ENCODE measurements at regions of chr3 and their contacts with region 1.

Region 1: GRCh38 chr3:101635954-101636798 is 40.8 kb downstream of the ZBTB11 start:
- DNase-seq: peak; percentile 40 to 85 (median 56)
- ATAC-seq: peak; percentile 69
- H3K4me3 ChIP-seq: peak overlapping the region; percentile 63
- H3K27ac ChIP-seq: peak overlapping the region; percentile 86
- H3K4me1 ChIP-seq: peaks cover 0 to 5% of the 10 kb centered on the region in 2 experiments; a peak in 3 of 5 replicates
- H3K27me3 ChIP-seq: no peaks in the 10 kb centered on the region
- CTCF ChIP-seq: peak; percentile 54 to 73 (median 72)
- EP300 ChIP-seq: no peak
- POLR2A ChIP-seq: no peak
- RAD21 ChIP-seq: peak in 1 of 2 experiments; percentile 51; a peak in 3 of 4 replicates

Region 2: GRCh38 chr3:101676765-101677435 is 40.7 kb after region 1 on chr3 and contains the start of gene ZBTB11:
- CTCF ChIA-PET with region 1: interaction called, 3 read pairs
- POLR2A ChIA-PET with region 1: interaction called, 8 read pairs
- in situ Hi-C with region 1: no loop called
- intact Hi-C with region 1: loop called (anchors 1 kb)
- DNase-seq: peak; percentile 81 to 99 (median 87)
- ATAC-seq: peak; percentile 80
- H3K4me3 ChIP-seq: peak within 1 kb of the TSS; percentile 79
- H3K27ac ChIP-seq: peak within 1 kb of the TSS; percentile 86
- H3K4me1 ChIP-seq: peaks cover 6 to 14% of the 10 kb centered on the region in 2 experiments; a peak in 4 of 5 replicates
- H3K27me3 ChIP-seq: no peaks in the 10 kb centered on the region
- CTCF ChIP-seq: peak; percentile 55 to 77 (median 67)
- EP300 ChIP-seq: peak; percentile 20
- POLR2A ChIP-seq: peak; percentile 68
- RAD21 ChIP-seq: peak in 1 of 2 experiments; percentile 28; a peak in 1 of 4 replicates
- polyA plus RNA-seq, gene ZBTB11: 6.2 to 7.2 TPM

Region 3: DNA sequence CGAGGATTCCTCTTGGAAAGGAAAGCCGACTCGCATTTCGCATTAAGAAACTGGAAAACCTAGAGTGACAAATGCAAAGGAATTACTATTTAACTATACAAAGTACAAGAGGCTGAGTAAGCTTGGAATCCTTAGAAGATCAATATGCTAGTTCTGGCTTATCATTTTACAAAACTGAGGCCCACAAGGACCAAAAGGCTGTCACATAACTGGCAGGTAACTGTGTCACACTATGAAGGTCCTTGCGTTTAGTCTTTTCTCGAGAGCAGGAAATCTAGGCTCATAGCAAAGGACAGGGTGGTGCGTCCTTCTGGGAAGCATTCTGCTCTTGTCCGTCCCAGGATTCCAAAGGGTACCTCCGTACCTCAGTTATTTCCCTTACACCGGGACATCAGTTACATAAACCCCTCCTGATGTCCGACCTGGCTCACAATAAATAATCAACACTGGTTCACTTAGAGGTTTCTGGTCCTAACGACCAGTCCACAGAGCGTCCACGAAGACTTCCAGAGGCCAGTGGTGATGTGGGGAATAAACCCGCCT is 49.8 kb after region 1 on chr3:
- CTCF ChIA-PET with region 1: no interaction called
- POLR2A ChIA-PET with region 1: no interaction called
- in situ Hi-C with region 1: no loop called
- intact Hi-C with region 1: loop called (anchors 2 kb)
- DNase-seq: peak in 1 of 4 experiments; percentile 10
- ATAC-seq: peak; percentile 5
- H3K4me3 ChIP-seq: peak overlapping the region; percentile 86
- H3K27ac ChIP-seq: peak overlapping the region; percentile 98
- H3K4me1 ChIP-seq: peaks cover 6 to 9% of the 10 kb centered on the region in 2 experiments; a peak in 3 of 5 replicates
- H3K27me3 ChIP-seq: no peaks in the 10 kb centered on the region
- CTCF ChIP-seq: no peak
- EP300 ChIP-seq: no peak
- POLR2A ChIP-seq: no peak
- RAD21 ChIP-seq: no peak

Measured in K562 (cell line).